T-cell (primary cell): ENCODE measurements at regions of chr2 and their contacts with region 1.

Region 1: GRCh38 chr2:98063291-98063854 is 23.6 kb upstream of the VWA3B start:
- DNase-seq: no peak
- ATAC-seq: no peak
- H3K4me3 ChIP-seq: no peak overlapping the region
- H3K4me3 Mint-ChIP-seq: no peak overlapping the region
- H3K27ac ChIP-seq: no peak overlapping the region
- H3K27ac Mint-ChIP-seq: no peak overlapping the region
- H3K4me1 ChIP-seq: no peaks in the 10 kb centered on the region
- H3K4me1 Mint-ChIP-seq: no peaks in the 10 kb centered on the region
- H3K27me3 ChIP-seq: peaks cover 0 to 3% of the 10 kb centered on the region in 2 experiments
- H3K27me3 Mint-ChIP-seq: peaks cover 12 to 26% of the 10 kb centered on the region in 2 donors

Region 2: DNA sequence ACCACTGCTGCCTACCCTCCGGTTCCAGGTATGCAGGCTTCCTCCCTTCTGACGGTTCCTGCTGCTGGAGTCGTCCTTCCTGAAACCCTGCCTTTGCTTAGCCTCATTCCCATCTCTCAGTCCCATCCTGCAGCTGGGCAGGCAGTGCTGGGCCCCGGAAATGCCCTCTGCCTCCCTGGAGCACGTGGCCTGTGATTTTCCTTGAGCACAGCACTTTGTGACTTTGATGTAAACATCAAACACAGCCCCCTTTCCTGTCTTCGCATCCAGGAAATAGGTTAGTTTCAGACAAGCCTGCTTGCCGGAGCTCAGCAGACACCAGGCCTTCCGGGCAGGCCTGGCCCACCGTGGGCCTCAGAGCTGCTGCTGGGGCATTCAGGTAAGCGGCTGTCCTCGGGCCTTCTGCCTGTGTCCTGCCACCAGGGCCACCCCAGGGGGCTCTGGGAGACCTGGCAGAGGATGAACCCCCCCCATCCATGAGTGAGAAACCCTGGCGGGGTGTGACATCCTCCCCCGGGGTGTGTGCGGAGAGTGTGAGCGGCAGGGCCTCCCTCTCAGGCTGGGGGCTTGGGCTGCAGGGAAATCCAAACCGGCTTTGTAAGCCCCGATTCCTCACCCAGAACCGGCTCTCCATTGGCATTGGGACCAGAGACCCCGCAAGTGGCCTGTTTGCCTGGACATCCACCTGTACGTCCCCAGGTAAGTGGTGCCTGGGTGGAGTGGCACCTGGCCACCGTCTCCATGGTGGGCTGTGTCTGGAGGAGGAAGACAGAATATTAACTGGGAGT is 349.9 kb before region 1 on chr2 and contains the start of gene ZAP70:
- CTCF ChIA-PET with region 1: no interaction called
- POLR2A ChIA-PET with region 1: no interaction called
- DNase-seq: peak; percentile 48 to 81 (median 60)
- ATAC-seq: peak; percentile 77 to 81 (median 78)
- H3K4me3 ChIP-seq: peak within 1 kb of the TSS; percentile 89 to 91
- H3K4me3 Mint-ChIP-seq: peak within 1 kb of the TSS; percentile 93 to 98 (median 94)
- H3K27ac ChIP-seq: peak within 1 kb of the TSS; percentile 89
- H3K27ac Mint-ChIP-seq: peak within 1 kb of the TSS; percentile 100
- H3K4me1 ChIP-seq: peaks cover 52 to 84% of the 10 kb centered on the region in 2 experiments
- H3K4me1 Mint-ChIP-seq: peaks cover 77 to 90% (median 85%) of the 10 kb centered on the region in 3 donors
- H3K27me3 ChIP-seq: peaks cover 0 to 2% of the 10 kb centered on the region in 2 experiments
- H3K27me3 Mint-ChIP-seq: no peaks in the 10 kb centered on the region
- total RNA-seq, gene ZAP70: 449 to 534 (median 468) TPM

Region 3: GRCh38 chr2:97924194-97924593 is 139.2 kb before region 1 on chr2:
- CTCF ChIA-PET with region 1: no interaction called
- POLR2A ChIA-PET with region 1: interaction called in 1 of 2 experiments, 10 read pairs
- DNase-seq: no peak
- ATAC-seq: no peak
- H3K4me3 ChIP-seq: no peak overlapping the region
- H3K4me3 Mint-ChIP-seq: no peak overlapping the region
- H3K27ac ChIP-seq: no peak overlapping the region
- H3K27ac Mint-ChIP-seq: no peak overlapping the region
- H3K4me1 ChIP-seq: no peaks in the 10 kb centered on the region
- H3K4me1 Mint-ChIP-seq: peaks cover 20 to 27% (median 20%) of the 10 kb centered on the region in 3 donors
- H3K27me3 ChIP-seq: no peaks in the 10 kb centered on the region
- H3K27me3 Mint-ChIP-seq: no peaks in the 10 kb centered on the region